Naive thymus-derived CD4-positive, alpha-beta T cell (primary cell): ENCODE measurements at regions of chr3 and their contacts with region 1.

Region 1: DNA sequence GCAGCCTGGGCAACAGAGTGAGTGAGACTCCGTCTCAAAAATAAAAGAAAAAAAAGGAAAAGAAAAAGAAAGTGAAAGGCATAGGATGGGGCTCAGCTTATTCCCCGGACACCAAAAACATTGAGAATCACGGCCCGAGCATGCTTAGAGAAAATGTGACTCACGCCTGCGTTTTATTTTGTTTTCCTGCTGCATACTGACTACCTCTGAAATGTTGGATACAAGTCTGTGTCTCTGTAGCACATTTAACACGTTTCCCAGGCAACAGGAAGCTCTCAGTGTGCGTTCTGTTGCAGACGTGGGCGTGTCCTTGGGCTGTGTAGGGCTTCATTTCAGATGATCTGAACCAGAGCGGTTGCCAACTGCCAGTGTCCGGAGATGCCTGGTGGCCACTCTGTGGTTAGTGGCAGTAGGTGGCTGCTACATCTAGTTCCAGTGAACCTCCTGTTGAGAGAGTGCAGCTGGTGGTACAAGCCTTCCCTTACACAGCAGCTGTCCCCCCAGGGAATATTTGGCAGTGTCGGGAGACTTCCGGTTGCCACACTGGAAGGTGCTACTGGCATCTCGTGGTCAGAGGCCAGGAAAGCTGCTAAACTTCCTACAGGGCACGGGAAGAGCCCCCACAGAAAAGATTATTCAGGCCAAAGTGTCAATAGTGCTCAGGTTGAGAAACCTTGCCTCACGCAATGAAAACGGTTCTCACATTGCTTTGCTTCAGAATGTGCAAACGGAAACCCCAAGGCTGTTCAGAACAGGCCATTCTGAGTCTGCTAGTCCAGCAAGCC is 3.1 kb downstream of the SLC51A start:
- DNase-seq: peak in 8 of 9 donors; percentile 56 to 90 (median 80)
- ATAC-seq: peak; percentile 96
- H3K4me3 ChIP-seq: peak overlapping the region; percentile 49
- H3K4me3 Mint-ChIP-seq: peak overlapping the region; percentile 76 to 89 (median 82)
- H3K27ac ChIP-seq: peak overlapping the region; percentile 60
- H3K27ac Mint-ChIP-seq: peak overlapping the region; percentile 87 to 98 (median 91)
- H3K4me1 ChIP-seq: peaks cover 6 to 7% of the 10 kb centered on the region in 2 donors
- H3K4me1 Mint-ChIP-seq: peaks cover 10 to 20% (median 15%) of the 10 kb centered on the region in 7 donors
- H3K27me3 ChIP-seq: no peaks in the 10 kb centered on the region
- H3K27me3 Mint-ChIP-seq: peaks cover 0 to 5% (median 4%) of the 10 kb centered on the region in 5 donors

Region 2: GRCh38 chr3:196207833-196208607 is 11.4 kb before region 1 on chr3:
- CTCF ChIA-PET with region 1: no interaction called
- POLR2A ChIA-PET with region 1: no interaction called
- intact Hi-C with region 1: loop called in 1 of 2 experiments (anchors 1 kb)
- DNase-seq: peak in 8 of 9 donors; percentile 31 to 76 (median 48)
- ATAC-seq: peak; percentile 81
- H3K4me3 ChIP-seq: peak overlapping the region; percentile 56
- H3K4me3 Mint-ChIP-seq: peak overlapping the region; percentile 68 to 89 (median 86)
- H3K27ac ChIP-seq: no peak overlapping the region
- H3K27ac Mint-ChIP-seq: peak overlapping the region in 8 of 9 donors; percentile 32 to 86 (median 56)
- H3K4me1 ChIP-seq: peaks cover 0 to 3% of the 10 kb centered on the region in 2 donors
- H3K4me1 Mint-ChIP-seq: peaks cover 5 to 24% (median 12%) of the 10 kb centered on the region in 7 donors
- H3K27me3 ChIP-seq: no peaks in the 10 kb centered on the region
- H3K27me3 Mint-ChIP-seq: peaks cover 0 to 31% (median 0%) of the 10 kb centered on the region in 5 donors